Stomach (tissue), 19 donors: ENCODE measurements at regions of chr18 and their contacts with region 1.

Region 1: GRCh38 chr18:58064406-58064998 is 20.5 kb downstream of the NEDD4L start:
- DNase-seq: no peak
- H3K4me3 ChIP-seq: no peak overlapping the region
- H3K27ac ChIP-seq: no peak overlapping the region
- H3K4me1 ChIP-seq: peaks cover 0 to 24% (median 12%) of the 10 kb centered on the region in 4 donors
- H3K27me3 ChIP-seq: no peaks in the 10 kb centered on the region
- CTCF ChIP-seq: no peak
- EP300 ChIP-seq: no peak
- POLR2A ChIP-seq: no peak

Region 2: DNA sequence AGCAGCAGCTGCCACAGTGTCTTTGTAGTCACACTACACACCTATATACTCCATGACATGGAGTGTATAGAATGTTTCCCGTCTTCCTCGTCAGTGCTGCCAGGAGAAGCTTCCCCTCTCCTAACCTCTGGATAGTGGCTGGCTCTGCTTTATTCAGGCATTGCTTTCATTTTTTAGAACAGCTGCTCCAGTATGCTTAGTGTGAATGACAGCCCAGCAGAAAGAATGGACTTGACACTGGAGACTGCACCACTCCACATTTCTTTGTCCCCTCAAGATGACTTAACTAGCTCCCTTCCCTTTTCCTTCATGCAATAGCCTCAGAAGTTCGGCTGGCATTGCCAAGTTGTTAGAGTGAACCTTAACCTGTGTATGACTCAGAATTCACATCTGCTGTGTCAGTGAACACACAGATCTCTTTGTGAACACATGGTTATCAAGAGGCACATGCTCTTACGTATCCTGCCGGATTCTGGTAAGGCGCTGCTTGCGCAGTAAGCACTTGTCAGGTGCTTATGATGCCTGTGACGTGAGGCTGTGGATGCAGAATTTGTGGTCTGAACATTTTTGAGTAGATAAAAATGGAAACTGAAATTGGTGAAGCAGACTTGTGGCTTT is 53.4 kb after region 1 on chr18:
- intact Hi-C with region 1: loop called (anchors 10 kb)
- DNase-seq: peak; percentile 67 to 91
- H3K4me3 ChIP-seq: no peak overlapping the region
- H3K27ac ChIP-seq: peak overlapping the region; percentile 67 to 84 (median 75)
- H3K4me1 ChIP-seq: peaks cover 14 to 38% (median 26%) of the 10 kb centered on the region in 4 donors
- H3K27me3 ChIP-seq: no peaks in the 10 kb centered on the region
- CTCF ChIP-seq: no peak
- EP300 ChIP-seq: peak; percentile 29
- POLR2A ChIP-seq: no peak

Region 3: GRCh38 chr18:58135701-58136331 is 71.3 kb after region 1 on chr18:
- intact Hi-C with region 1: no loop called
- DNase-seq: peak; percentile 65 to 84
- H3K4me3 ChIP-seq: no peak overlapping the region
- H3K27ac ChIP-seq: peak overlapping the region in 2 of 5 donors; percentile 1 to 27
- H3K4me1 ChIP-seq: peaks cover 14 to 36% (median 25%) of the 10 kb centered on the region in 4 donors
- H3K27me3 ChIP-seq: no peaks in the 10 kb centered on the region
- CTCF ChIP-seq: peak in 5 of 7 experiments; percentile 67 to 86 (median 83)
- EP300 ChIP-seq: no peak
- POLR2A ChIP-seq: no peak

Region 4: DNA sequence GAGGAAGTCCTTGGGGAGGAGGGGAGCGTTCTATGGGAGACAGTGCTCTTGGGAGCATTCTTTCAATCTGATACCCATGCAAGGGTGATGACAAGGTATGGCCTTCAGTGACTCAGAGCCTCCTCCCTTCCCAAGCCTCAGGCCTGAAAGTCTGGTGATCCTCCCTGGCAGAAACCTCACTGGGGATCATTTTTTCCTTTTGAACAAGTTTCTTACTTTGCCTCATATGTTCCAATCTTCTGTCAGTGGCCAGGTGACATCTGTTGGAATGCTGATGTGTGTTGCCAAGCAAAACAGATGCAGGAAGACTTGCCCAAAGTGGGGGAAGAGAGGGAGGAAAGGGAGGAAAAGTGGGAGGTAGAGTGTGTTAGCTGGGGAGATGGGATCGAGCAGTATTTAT is 204.3 kb after region 1 on chr18:
- intact Hi-C with region 1: no loop called
- DNase-seq: peak in 1 of 2 donors; percentile 26
- H3K4me3 ChIP-seq: no peak overlapping the region
- H3K27ac ChIP-seq: peak overlapping the region; percentile 71 to 93 (median 84)
- H3K4me1 ChIP-seq: peaks cover 33 to 70% (median 53%) of the 10 kb centered on the region in 4 donors
- H3K27me3 ChIP-seq: no peaks in the 10 kb centered on the region
- CTCF ChIP-seq: no peak
- EP300 ChIP-seq: no peak
- POLR2A ChIP-seq: no peak

Region 5: DNA sequence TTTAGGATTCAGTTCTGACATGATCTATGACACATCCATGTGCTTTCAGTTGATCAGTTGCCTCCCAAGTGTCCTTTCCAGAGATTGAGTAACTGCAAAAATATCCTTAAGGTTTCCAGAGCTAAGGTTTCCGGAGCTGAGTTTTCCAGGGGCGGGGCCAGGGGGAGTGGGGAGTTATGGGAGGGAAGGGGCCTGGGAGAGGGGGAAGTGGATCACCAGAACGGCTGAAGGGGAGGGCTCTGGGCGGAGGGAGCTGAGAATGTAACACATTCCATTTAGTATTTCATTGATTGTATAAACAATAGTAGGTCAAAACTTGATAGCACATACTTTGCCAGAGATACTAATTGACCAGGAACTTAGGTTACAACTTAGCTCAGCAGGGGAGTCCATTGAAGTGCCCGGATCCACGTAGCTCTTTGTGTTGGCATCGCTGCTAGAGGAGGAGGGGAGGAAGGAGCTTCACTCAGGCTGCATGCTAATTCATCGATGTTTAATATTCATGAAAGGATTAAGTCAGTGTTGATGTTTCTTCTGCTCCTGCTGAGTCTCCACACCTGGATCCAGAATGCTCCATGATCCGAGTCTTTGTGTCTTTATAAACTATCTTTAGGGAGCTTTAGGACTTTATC is 274.6 kb after region 1 on chr18:
- intact Hi-C with region 1: no loop called
- DNase-seq: peak; percentile 48 to 86
- H3K4me3 ChIP-seq: no peak overlapping the region
- H3K27ac ChIP-seq: peak overlapping the region in 4 of 5 donors; percentile 38 to 57 (median 40)
- H3K4me1 ChIP-seq: peaks cover 19 to 31% (median 28%) of the 10 kb centered on the region in 4 donors
- H3K27me3 ChIP-seq: no peaks in the 10 kb centered on the region
- CTCF ChIP-seq: no peak
- EP300 ChIP-seq: no peak
- POLR2A ChIP-seq: no peak